Esophagus muscularis mucosa (tissue), 4 donors: ENCODE measurements at regions of chr12 and their contacts with region 1.

Region 1: DNA sequence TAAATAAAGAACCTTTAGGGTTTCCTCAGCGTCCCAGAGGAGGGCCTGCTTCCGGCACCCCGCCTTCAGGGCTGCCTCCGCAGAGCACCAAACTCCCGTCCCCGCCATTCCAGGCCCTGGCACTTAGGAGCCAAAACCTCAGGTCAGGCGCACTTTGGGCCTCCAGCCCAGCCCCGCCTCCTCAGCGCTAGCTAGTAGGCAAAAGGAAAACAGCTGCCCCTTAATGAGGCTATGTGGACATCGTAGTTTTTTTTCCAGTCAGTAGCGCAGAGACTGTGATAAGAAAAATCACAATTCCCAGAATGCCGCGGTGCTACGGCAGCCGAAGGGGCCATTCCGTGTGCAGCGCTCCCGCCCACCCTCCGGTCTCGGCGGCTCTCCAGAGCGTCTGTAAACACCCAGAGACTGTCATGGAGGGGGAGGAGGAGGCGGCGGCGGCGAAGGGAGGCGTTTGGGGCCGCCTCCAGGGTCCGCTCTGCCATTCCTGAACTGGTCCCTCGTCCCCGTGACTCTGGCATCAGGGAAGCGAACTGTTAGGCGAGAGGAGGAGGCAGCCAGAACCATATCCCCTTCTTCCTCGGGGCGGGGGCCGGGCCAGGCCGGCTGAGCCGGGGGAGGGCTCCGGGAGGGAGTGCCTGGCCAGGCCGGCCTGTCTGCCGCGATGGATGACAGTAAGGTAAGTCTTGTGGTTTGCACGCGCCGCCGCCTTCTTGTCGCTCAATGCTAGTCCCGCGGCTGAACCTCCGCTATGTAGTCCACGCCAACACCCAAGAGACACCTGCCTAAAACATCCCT is at the start of gene CREBL2:
- DNase-seq: peak; percentile 98
- H3K4me3 ChIP-seq: peak within 1 kb of the TSS; percentile 76 to 85 (median 79)
- H3K27ac ChIP-seq: peak within 1 kb of the TSS; percentile 91 to 96 (median 93)
- H3K4me1 ChIP-seq: peaks cover 20 to 50% (median 46%) of the 10 kb centered on the region in 4 donors
- H3K27me3 ChIP-seq: no peaks in the 10 kb centered on the region
- CTCF ChIP-seq: no peak
- EP300 ChIP-seq: no peak
- POLR2A ChIP-seq: no peak
- total RNA-seq, gene CREBL2: 33.0 to 53.5 (median 45.9) TPM

Region 2: GRCh38 chr12:12546314-12546772 is 65.4 kb before region 1 on chr12:
- intact Hi-C with region 1: no loop called
- DNase-seq: no peak
- H3K4me3 ChIP-seq: no peak overlapping the region
- H3K27ac ChIP-seq: no peak overlapping the region
- H3K4me1 ChIP-seq: peaks cover 0 to 7% (median 0%) of the 10 kb centered on the region in 4 donors
- H3K27me3 ChIP-seq: no peaks in the 10 kb centered on the region
- CTCF ChIP-seq: no peak
- EP300 ChIP-seq: no peak
- POLR2A ChIP-seq: no peak

Region 3: DNA sequence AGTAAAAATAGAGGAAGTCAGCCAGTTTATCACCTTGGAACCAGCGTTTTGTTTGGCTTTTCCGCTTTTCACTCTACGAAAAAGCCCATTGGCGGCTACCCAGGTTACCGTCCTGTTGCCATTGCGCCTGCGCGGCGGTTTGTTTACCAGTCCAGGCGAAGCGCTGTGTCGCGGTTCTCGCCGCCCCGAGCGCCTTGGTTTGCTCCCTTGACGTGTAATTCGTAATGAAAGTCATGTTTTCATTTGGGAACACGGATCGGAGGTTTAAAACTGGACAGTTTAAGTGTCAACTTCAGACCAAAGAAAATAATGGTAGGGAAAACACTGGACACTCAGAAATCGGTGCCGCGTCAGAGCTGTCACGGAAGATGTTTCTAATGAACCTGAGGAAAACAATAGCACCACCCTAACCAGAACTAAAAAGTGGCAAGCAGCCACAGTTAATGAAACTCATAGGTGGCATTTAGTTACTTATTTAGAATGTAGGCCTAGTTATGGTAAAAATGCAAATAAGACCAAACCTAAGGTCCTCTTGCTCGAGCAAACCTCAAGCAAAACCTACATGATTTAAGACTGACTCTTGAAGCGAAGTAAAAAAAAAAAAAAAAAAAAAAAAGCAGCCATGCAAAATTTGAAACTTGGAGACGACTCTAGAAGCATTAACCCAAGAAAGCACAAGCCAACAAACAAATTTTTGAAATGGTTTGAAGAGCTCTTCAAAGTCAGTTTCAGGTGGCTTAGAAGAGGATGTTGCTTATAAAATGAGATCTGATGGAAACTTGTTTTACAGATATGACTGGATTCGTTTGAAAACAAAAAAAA is 85.1 kb after region 1 on chr12:
- intact Hi-C with region 1: loop called (anchors 5 kb)
- DNase-seq: peak; percentile 97
- H3K4me3 ChIP-seq: peak overlapping the region; percentile 52 to 63 (median 60)
- H3K27ac ChIP-seq: peak overlapping the region; percentile 87 to 91 (median 91)
- H3K4me1 ChIP-seq: peaks cover 4 to 8% (median 6%) of the 10 kb centered on the region in 4 donors
- H3K27me3 ChIP-seq: no peaks in the 10 kb centered on the region
- CTCF ChIP-seq: peak in 1 of 3 experiments; percentile 1
- EP300 ChIP-seq: no peak
- POLR2A ChIP-seq: peak; percentile 10